ENCODE measurements at regions of chr14 and their contacts with region 1.

Region 1: DNA sequence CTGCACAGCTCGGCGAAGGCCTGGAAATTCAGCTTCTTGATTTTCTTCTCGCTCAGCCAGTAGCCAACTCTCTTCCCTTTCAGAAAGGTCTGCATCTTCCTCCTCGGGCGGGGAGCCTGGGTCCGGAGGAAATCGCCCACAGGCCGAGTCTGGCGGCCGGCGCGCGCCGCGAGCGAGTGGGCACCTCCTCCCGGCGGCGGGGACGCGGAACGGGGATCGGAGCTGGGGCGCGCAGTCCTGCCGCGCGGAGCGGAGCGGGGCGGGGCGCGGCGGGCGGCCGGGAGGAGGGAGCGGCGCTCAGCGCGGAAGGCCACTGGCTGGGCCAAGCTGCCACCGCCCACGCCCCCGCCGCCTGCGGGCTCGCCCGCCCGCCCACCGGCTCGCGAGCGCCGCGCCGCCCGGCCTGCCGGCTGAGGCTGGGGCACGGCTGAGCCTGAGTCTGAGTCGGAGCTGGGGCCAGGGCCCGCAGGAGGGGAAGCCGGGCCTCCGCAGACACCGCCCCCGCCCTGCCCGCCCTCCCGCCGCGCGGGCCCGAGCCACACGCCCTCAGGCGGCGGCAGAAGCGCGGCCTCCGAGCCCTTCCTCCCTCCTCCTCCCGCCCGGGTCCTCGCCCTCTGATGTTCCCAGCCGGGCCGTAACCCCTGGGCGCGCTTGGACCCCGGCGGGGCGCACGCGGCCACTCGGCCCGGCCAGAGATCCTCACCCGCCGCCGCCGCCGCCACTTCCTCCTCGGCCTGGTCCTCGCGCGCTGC is 480 bp downstream of the ITPK1 start:
- DNase-seq: peak; percentile 92
- ATAC-seq: peak; percentile 93 to 94

Region 2: GRCh38 chr14:93033983-93034670 is 81.1 kb before region 1 on chr14:
- intact Hi-C with region 1: loop called in 1 of 2 experiments (anchors 10 kb)
- DNase-seq: no peak
- ATAC-seq: peak in 1 of 2 donors; percentile 51

Region 3: GRCh38 chr14:93059917-93060545 is 55.2 kb before region 1 on chr14:
- intact Hi-C with region 1: no loop called
- DNase-seq: no peak
- ATAC-seq: peak in 1 of 2 donors; percentile 10

Region 4: DNA sequence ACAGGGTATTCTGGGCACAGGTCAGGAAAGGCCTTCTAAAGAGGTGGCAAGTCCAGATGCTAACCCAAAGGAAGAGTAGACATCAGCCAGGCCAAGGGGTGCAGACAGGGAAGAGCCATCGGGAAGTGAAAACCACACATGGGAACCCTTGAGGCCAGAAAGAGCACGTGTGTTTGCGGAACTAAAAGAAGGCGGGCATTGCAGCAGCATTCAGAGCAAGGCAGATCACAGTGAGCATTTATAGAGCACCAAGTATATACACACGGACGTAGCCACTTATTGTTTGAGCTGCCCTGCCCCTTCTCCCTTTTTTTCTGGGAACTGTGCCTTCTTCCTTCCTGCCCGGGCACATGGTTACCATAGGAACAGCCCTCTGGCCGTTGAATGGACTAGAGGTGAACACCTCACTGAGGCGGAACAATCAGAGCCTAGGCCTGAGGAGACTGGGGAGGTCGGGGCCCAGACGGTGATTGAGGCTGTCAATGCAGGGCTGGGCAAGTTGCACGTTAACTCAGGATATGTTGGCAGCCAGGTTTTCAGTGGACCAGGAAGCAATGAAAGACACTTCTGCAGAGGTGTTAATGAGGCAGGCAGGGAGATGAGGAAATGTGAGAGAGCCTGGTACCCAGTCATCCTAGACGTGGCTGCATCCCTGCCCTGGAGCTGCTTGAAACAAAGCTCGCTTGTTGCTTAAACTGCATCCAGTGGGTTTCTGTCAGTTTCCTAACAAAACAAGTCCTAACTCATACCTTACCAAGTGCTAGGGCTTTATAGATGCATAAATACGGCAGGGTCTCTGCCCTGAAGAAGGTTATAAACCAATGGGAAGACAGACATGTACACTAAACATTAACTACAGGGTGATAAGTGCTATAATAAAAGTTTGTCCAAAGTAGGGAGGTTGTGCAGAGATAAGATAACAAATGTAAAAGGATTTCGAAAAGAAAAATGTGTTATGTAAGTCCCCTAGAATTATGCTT is 35.3 kb after region 1 on chr14:
- intact Hi-C with region 1: no loop called
- DNase-seq: no peak
- ATAC-seq: peak in 1 of 2 donors; percentile 32

Region 5: DNA sequence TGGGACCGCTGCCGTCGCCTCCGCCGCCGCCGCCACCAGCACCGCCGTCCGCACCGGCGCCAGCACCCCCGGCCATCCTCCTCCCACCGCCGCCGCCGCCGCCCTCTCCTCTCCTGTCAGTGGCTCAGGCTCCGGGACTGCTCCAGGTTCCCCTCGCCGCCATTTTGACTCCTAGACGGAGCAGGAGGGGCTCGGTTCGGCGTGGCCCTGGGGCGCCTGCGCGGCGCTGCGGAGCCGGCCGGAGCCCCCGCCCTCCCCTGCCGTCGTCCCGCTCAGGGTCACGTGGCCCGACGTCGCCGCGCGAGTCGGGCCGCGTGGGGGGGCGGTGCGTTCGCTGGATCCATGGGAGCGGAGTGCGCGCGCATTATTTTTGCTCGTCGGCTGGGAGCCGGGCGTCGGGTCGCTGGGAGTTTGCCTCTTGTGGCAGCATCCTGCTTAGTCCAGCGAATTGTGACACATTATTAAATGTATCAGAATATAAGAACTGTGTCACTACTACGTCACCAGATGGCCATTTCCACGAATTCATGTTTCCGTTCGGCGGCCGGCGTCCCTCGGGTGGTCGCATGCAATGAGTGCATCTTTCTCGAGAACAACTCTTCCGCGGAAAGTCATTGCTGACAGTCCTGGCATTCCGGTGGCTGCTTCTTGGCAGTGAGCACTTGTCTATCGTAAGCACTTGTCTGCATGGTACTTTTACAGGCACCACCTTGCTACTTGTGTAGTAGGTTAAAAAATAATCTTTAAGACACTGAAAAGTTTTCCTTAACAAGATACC is 217.8 kb after region 1 on chr14 and contains the start of gene BTBD7:
- intact Hi-C with region 1: no loop called
- DNase-seq: peak; percentile 97
- ATAC-seq: peak; percentile 98 to 99
- total RNA-seq, gene BTBD7: 24.4 to 25.1 TPM

Region 6: GRCh38 chr14:93520053-93520607 is 404.9 kb after region 1 on chr14:
- intact Hi-C with region 1: no loop called
- DNase-seq: no peak
- ATAC-seq: no peak

Measured in left cardiac atrium (tissue), 4 donors.